Dorsolateral prefrontal cortex (tissue), 120 donors: ENCODE measurements at regions of chr19 and their contacts with region 1.

Region 1: DNA sequence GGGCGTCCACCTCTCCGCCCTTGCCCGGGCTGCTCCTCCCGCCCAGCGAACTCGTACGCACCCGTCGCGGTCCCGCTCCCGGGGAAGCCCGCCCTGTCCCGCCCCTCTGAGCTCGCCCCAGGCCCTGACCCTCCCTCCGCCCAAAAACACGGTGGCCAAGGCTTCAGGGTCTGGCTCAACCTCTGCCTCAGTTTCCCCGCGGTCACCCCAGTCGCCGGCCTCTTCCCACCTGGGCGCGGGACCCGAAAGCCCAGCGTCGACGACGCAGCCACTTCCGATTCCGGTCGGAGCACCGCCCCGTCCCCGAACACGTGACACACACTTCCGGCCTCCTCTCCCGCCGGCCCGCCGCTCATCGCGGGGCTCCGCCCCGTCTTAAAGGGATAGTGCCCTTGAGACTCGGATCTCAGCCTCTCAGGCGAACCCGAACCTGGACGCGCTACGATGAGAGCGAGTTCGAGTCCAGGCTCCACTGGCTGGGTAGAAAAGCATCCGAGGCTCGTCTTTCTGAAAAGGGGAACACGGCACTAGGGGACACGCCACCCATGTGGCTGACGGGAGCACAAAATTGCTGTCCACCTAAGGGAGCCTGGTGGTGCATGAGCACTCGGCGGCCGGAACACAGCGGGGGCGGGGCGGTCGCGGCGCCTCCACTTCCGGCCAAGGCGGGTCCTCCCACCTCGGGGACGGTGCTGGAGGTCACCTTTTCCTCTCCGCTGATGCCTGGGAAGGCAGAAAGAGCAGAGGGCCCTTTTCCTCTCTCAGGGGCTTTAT is at the start of gene C19orf25:
- DNase-seq: peak; percentile 90 to 97 (median 94)
- H3K4me3 ChIP-seq: peak within 1 kb of the TSS; percentile 67 to 99 (median 94)
- H3K27ac ChIP-seq: peak within 1 kb of the TSS in 52 of 59 donors; percentile 6 to 84 (median 68)
- H3K27me3 ChIP-seq: no peaks in the 10 kb centered on the region
- CTCF ChIP-seq: peak in 16 of 56 donors; percentile 5 to 41 (median 23)
- total RNA-seq, gene C19orf25: 28.3 to 63.0 (median 35.2) TPM

Region 2: DNA sequence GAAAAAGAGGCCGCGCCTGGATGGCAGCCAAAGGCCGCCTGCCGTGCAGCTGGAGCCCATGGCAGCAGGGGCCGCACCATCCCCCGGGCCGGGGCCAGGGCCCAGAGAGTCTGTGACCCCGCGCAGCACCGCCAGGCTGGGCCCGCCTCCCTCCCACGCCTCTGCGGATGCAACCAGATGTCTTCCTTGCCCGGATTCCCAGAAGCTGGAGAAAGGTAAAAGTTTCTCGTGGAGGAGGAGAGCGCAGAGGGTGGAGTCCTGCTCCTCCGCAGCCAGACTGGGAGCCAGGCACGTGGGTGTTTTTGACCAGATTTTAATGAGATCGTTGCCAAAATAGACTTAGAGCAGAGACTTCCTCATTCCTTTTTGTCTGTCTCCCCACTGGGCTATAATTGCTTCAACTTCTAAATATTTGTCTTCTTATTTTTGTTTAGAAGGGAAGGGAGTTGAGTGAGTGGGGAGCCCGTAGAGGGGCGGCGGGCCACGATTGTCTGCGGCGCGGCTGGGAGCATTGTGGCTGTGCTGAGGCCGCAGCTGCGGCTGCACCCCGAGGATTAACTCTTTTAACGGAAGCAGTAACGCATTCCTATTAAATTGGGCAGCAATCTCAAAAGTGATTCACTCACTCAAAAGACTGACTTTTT is 118.2 kb before region 1 on chr19:
- intact Hi-C with region 1: no loop called
- DNase-seq: peak; percentile 57 to 90 (median 85)
- H3K4me3 ChIP-seq: peak overlapping the region; percentile 0 to 62 (median 47)
- H3K27ac ChIP-seq: peak overlapping the region; percentile 47 to 94 (median 88)
- H3K27me3 ChIP-seq: no peaks in the 10 kb centered on the region
- CTCF ChIP-seq: peak in 28 of 56 donors; percentile 4 to 56 (median 32)

Region 3: GRCh38 chr19:1427221-1427920 is 51.8 kb before region 1 on chr19:
- intact Hi-C with region 1: no loop called
- DNase-seq: no peak
- H3K4me3 ChIP-seq: no peak overlapping the region
- H3K27ac ChIP-seq: peak overlapping the region in 24 of 59 donors; percentile 4 to 75 (median 27)
- H3K27me3 ChIP-seq: no peaks in the 10 kb centered on the region
- CTCF ChIP-seq: no peak

Region 4: GRCh38 chr19:1438035-1438932 is 40.8 kb before region 1 on chr19 and contains the start of gene RPS15:
- intact Hi-C with region 1: loop called in 1 of 2 experiments (anchors 5 kb)
- DNase-seq: peak; percentile 87 to 95 (median 92)
- H3K4me3 ChIP-seq: peak within 1 kb of the TSS; percentile 49 to 100 (median 88)
- H3K27ac ChIP-seq: peak within 1 kb of the TSS; percentile 53 to 96 (median 87)
- H3K27me3 ChIP-seq: no peaks in the 10 kb centered on the region
- CTCF ChIP-seq: peak; percentile 94 to 100 (median 99)
- total RNA-seq, gene RPS15: 343 to 670 (median 497) TPM

Region 5: DNA sequence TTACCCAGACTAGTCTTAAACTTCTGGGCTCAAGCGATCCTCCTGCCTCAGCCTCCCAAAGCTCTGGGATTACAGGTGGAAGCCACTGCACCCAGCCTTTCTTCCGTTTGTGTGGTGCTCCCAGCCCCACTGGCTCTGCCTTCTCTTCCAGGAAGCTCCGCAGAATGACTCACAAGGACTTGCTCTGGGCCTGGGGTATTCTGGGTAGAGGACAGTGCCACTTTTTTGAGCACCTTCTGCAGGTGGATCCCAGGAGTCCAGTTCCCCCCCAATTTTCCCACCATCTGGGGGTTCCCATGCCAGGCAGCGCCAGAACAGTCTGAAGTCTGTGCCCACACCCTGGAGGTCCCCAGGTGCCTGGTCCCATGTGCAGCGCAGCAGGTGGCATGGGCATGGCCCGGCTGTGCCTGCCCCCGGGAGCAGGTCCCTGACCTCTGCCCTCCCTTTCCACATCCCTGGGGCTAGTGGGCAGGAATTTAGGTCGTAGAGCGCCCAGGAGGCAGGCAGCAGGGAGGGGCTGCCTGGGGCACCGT is 13.4 kb after region 1 on chr19:
- intact Hi-C with region 1: no loop called
- DNase-seq: no peak
- H3K4me3 ChIP-seq: no peak overlapping the region
- H3K27ac ChIP-seq: no peak overlapping the region
- H3K27me3 ChIP-seq: no peaks in the 10 kb centered on the region
- CTCF ChIP-seq: no peak